Left cardiac atrium (tissue), 4 donors: ENCODE measurements at regions of chr20 and their contacts with region 1.

Region 1: GRCh38 chr20:21812379-21812778 is 106.9 kb downstream of the PAX1 start:
- DNase-seq: no peak
- ATAC-seq: no peak

Region 2: GRCh38 chr20:21656308-21657073 is 155.9 kb before region 1 on chr20:
- intact Hi-C with region 1: no loop called
- DNase-seq: no peak
- ATAC-seq: no peak

Region 3: DNA sequence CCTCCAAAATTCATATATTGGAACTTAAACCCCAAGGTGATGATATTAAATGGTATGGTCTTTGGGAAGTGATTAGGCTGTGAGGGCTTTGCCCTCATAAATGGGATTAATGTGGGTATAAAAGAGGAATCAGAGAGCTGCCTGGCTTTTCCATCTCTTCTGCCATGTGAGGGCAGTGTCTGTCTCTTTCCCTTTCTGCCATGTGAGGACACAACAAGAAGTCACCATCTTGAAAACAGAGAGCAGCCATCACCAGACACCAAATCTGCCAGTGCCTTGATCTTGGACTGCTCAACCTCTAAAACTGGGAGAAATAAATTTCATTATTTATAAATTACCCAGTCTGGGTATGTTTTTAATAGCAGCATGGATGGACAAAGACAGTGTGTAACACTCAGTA is 156.1 kb after region 1 on chr20:
- intact Hi-C with region 1: no loop called
- DNase-seq: no peak
- ATAC-seq: no peak

Region 4: DNA sequence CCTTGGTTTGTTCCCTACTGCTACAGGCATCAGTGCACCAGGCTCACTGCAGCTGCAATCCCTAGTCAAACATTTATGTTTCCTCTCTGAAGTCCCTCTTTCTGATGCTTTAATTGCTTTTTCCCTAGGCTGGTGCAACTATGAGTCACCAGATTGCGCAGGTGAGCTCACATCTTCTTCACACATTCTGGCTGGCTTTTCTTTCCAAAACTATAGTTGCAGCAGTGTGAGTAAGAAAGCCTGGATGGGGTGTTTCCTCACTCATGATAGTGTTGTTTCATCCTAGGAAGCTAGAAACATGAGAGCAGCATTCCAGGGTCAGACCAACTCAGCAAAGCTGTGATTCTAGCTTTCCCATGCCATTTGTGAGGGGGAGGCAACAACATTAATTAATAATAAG is 189.5 kb after region 1 on chr20:
- intact Hi-C with region 1: no loop called
- DNase-seq: no peak
- ATAC-seq: peak in 1 of 2 donors; percentile 96

Region 5: DNA sequence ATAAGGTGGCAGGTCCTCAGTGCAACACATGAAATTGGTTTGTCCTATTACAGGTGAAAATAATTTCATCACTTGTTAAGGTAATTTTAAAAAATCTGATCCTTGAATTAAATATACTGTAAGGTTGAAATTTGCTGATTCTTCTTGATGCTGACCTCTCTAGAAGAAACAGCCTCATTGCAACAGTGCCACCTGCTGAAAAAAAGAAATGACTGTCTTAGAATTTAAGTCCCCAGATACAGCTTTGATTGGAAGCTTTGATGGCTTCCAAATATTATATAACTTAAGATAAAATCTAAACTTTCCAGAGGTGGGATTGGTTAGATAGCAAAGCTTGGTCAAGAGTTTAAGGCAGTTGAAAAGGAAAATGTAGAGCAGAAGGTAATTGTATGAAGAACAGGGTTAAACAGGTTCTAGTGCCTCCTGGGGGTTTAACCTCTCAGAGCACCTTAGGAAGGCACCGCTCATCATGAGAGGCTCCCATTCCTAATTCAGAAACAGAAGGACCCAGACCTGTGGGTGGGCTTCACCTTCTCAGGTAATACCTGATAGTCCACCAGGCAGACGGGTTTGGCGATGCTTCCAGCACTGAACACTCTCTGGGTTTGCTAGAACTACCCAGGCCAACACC is 294.0 kb after region 1 on chr20:
- intact Hi-C with region 1: loop called in 1 of 2 experiments (anchors 5 kb)
- DNase-seq: no peak
- ATAC-seq: peak in 1 of 2 donors; percentile 44